ENCODE measurements at regions of chr17 and their contacts with region 1.

Region 1: GRCh38 chr17:61179380-61179806 is 220.2 kb upstream of the TBX2 start:
- DNase-seq: no peak
- H3K4me3 ChIP-seq: no peak overlapping the region
- H3K27ac ChIP-seq: no peak overlapping the region
- H3K4me1 ChIP-seq: no peaks in the 10 kb centered on the region
- H3K27me3 ChIP-seq: no peaks in the 10 kb centered on the region
- CTCF ChIP-seq: no peak
- EP300 ChIP-seq: no peak
- POLR2A ChIP-seq: no peak

Region 2: DNA sequence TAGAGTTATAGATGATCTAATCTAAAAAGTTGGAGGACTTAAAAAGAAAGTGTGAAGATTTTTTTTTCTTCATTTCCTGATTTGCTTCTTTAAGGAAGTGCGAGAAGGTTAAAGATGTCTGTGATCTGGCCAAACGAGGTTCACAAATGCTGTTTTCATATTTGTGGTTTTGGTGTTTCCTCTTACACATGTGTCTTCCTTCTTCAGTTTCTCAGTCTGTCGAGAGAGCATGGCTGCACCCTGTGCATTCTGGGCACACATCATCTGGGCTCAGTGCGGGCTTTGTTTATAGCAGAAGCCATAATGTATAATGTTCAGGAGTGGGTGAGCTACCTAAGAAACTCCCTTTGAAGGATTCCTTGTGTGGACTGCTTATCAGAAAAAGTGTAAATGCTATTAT is 40.2 kb before region 1 on chr17:
- intact Hi-C with region 1: no loop called
- DNase-seq: no peak
- H3K4me3 ChIP-seq: no peak overlapping the region
- H3K27ac ChIP-seq: no peak overlapping the region
- H3K4me1 ChIP-seq: peaks cover 0 to 5% (median 0%) of the 10 kb centered on the region in 4 donors
- H3K27me3 ChIP-seq: no peaks in the 10 kb centered on the region
- CTCF ChIP-seq: no peak
- EP300 ChIP-seq: no peak
- POLR2A ChIP-seq: no peak

Region 3: GRCh38 chr17:61157246-61157886 is 22.0 kb before region 1 on chr17:
- intact Hi-C with region 1: no loop called
- DNase-seq: no peak
- H3K4me3 ChIP-seq: no peak overlapping the region
- H3K27ac ChIP-seq: peak overlapping the region in 1 of 4 donors; percentile 21
- H3K4me1 ChIP-seq: peaks cover 0 to 10% (median 4%) of the 10 kb centered on the region in 4 donors
- H3K27me3 ChIP-seq: no peaks in the 10 kb centered on the region
- CTCF ChIP-seq: no peak
- EP300 ChIP-seq: no peak
- POLR2A ChIP-seq: no peak

Region 4: GRCh38 chr17:61196302-61196704 is 16.9 kb after region 1 on chr17:
- intact Hi-C with region 1: loop called (anchors 2 kb)
- DNase-seq: no peak
- H3K4me3 ChIP-seq: no peak overlapping the region
- H3K27ac ChIP-seq: no peak overlapping the region
- H3K4me1 ChIP-seq: peaks cover 0 to 6% (median 2%) of the 10 kb centered on the region in 4 donors
- H3K27me3 ChIP-seq: no peaks in the 10 kb centered on the region
- CTCF ChIP-seq: no peak
- EP300 ChIP-seq: no peak
- POLR2A ChIP-seq: no peak

Measured in sigmoid colon (tissue), 7 donors.